ENCODE measurements at regions of chr1 and their contacts with region 1.

Region 1: GRCh38 chr1:154431586-154432373 is 26.6 kb downstream of the IL6R start:
- DNase-seq: peak; percentile 86
- H3K4me3 Mint-ChIP-seq: no peak overlapping the region
- H3K27ac Mint-ChIP-seq: peak overlapping the region; percentile 85
- H3K4me1 Mint-ChIP-seq: peaks cover 56% of the 10 kb centered on the region
- H3K27me3 Mint-ChIP-seq: no peaks in the 10 kb centered on the region

Region 2: GRCh38 chr1:153869473-153869872 is 562.3 kb before region 1 on chr1:
- CTCF ChIA-PET with region 1: no interaction called
- POLR2A ChIA-PET with region 1: no interaction called
- intact Hi-C with region 1: no loop called
- DNase-seq: no peak
- H3K4me3 Mint-ChIP-seq: no peak overlapping the region
- H3K27ac Mint-ChIP-seq: no peak overlapping the region
- H3K4me1 Mint-ChIP-seq: peaks cover 27% of the 10 kb centered on the region
- H3K27me3 Mint-ChIP-seq: no peaks in the 10 kb centered on the region

Region 3: DNA sequence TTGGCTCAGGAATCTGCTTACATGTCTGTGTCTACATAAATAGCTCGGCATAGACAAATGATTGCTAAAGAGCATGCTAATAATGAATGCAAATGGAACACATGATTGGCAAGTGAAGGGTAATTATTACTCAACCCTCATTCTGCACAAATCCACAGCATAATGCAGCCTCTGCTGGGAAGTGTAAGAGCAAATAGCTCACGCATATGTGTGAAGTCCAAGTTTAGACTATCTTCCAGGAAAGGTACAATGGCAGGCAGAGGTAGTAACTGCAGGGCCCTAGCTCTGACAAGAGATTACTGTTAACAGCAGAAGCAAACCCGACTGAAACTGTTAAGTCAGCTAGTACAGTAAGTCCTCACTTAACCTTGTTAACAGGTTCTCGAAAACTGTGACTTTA is 33.6 kb before region 1 on chr1:
- CTCF ChIA-PET with region 1: no interaction called
- POLR2A ChIA-PET with region 1: interaction called, 3 read pairs
- intact Hi-C with region 1: loop called (anchors 5 kb)
- DNase-seq: no peak
- H3K4me3 Mint-ChIP-seq: peak overlapping the region; percentile 51
- H3K27ac Mint-ChIP-seq: peak overlapping the region; percentile 74
- H3K4me1 Mint-ChIP-seq: peaks cover 44% of the 10 kb centered on the region
- H3K27me3 Mint-ChIP-seq: no peaks in the 10 kb centered on the region

Region 4: GRCh38 chr1:154419620-154420571 is 11.9 kb before region 1 on chr1:
- CTCF ChIA-PET with region 1: interaction called, 5 read pairs
- POLR2A ChIA-PET with region 1: interaction called, 4 read pairs
- intact Hi-C with region 1: loop called (anchors 1 kb)
- DNase-seq: peak; percentile 88
- H3K4me3 Mint-ChIP-seq: peak overlapping the region; percentile 54
- H3K27ac Mint-ChIP-seq: peak overlapping the region; percentile 89
- H3K4me1 Mint-ChIP-seq: peaks cover 87% of the 10 kb centered on the region
- H3K27me3 Mint-ChIP-seq: no peaks in the 10 kb centered on the region

Region 5: DNA sequence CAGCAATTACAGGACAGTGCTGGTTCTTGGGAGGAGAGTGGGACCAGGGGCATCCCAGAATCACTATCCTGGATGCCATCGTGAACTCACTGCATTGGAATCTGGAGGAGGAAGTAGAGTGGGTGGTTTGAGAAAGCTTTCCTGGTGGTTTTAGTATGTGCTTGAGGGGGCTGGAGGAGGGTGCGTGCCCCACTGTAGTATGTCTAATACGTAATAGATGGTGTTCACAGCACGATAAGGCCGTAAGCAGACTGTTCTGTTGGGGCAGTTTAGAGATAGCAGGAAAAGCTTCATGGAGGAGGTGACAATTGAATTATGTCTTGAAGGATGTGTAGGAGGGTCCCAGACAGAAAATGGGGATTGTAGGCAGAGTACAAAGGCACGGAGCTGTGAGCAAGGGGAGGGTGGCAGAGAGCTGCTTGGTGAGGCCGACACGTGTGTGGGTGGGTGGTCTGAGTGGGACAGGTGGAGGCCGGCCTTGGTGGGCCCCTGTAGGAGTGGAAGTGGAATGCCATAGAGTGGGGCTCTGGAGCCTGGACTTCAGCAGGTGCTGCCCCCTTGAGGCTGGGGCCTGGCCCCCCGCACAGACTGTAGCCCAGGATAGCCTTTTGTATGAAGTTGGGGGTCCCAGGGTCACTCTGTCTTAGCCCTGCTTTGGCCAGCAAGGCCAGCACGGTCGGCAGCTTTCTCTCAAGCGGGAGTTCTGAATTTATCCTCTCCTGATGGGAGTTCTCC is 10.4 kb after region 1 on chr1:
- CTCF ChIA-PET with region 1: interaction called, 4 read pairs
- POLR2A ChIA-PET with region 1: interaction called, 5 read pairs
- intact Hi-C with region 1: loop called (anchors 1 kb)
- DNase-seq: no peak
- H3K4me3 Mint-ChIP-seq: no peak overlapping the region
- H3K27ac Mint-ChIP-seq: peak overlapping the region; percentile 61
- H3K4me1 Mint-ChIP-seq: peaks cover 71% of the 10 kb centered on the region
- H3K27me3 Mint-ChIP-seq: no peaks in the 10 kb centered on the region